ENCODE measurements at regions of chr12 and their contacts with region 1.

Region 1: GRCh38 chr12:34022079-34022830 is at the start of gene ALG10:
- DNase-seq: peak; percentile 83
- ATAC-seq: peak; percentile 100
- H3K4me3 ChIP-seq: peak within 1 kb of the TSS; percentile 88
- H3K27ac ChIP-seq: peak within 1 kb of the TSS; percentile 78
- H3K4me1 ChIP-seq: no peaks in the 10 kb centered on the region
- H3K27me3 ChIP-seq: no peaks in the 10 kb centered on the region
- CTCF ChIP-seq: peak; percentile 55 to 60 (median 59)
- EP300 ChIP-seq: no peak
- POLR2A ChIP-seq: peak; percentile 81
- RAD21 ChIP-seq: peak; percentile 74
- polyA plus RNA-seq, gene ALG10: 3.1 to 4.6 TPM

Region 2: GRCh38 chr12:32365473-32366064 is 1656.7 kb before region 1 on chr12:
- CTCF ChIA-PET with region 1: interaction called, 5 read pairs
- POLR2A ChIA-PET with region 1: no interaction called
- RAD21 ChIA-PET with region 1: no interaction called
- SMC1A ChIA-PET with region 1: interaction called, 3 read pairs
- in situ Hi-C with region 1: loop called (anchors 25 kb)
- intact Hi-C with region 1: no loop called
- DNase-seq: peak; percentile 8
- ATAC-seq: peak; percentile 86
- H3K4me3 ChIP-seq: no peak overlapping the region
- H3K27ac ChIP-seq: no peak overlapping the region
- H3K4me1 ChIP-seq: no peaks in the 10 kb centered on the region
- H3K27me3 ChIP-seq: no peaks in the 10 kb centered on the region
- CTCF ChIP-seq: peak; percentile 67 to 83 (median 67)
- EP300 ChIP-seq: no peak
- POLR2A ChIP-seq: no peak
- RAD21 ChIP-seq: peak; percentile 85

Region 3: GRCh38 chr12:32947206-32948067 is 1074.8 kb before region 1 on chr12:
- CTCF ChIA-PET with region 1: interaction called, 4 read pairs
- POLR2A ChIA-PET with region 1: no interaction called
- RAD21 ChIA-PET with region 1: no interaction called
- SMC1A ChIA-PET with region 1: interaction called, 4 read pairs
- in situ Hi-C with region 1: loop called (anchors 25 kb)
- intact Hi-C with region 1: no loop called
- DNase-seq: no peak
- ATAC-seq: no peak
- H3K4me3 ChIP-seq: no peak overlapping the region
- H3K27ac ChIP-seq: no peak overlapping the region
- H3K4me1 ChIP-seq: no peaks in the 10 kb centered on the region
- H3K27me3 ChIP-seq: no peaks in the 10 kb centered on the region
- CTCF ChIP-seq: no peak; a peak in 1 of 6 replicates
- EP300 ChIP-seq: no peak
- POLR2A ChIP-seq: no peak
- RAD21 ChIP-seq: 0 out of 2 replicates have a peak, but pooled peaks have one; percentile 18

Measured in GM12878 (cell line).